Activated B cell treated with CpG ODN at 0.5 μM for 24 hours (primary cell): ENCODE measurements at regions of chr4 and their contacts with region 1.

Region 1: GRCh38 chr4:184453365-184454160 is 20.8 kb downstream of the IRF2 start:
- DNase-seq: no peak
- ATAC-seq: peak; percentile 81
- H3K4me3 Mint-ChIP-seq: peak overlapping the region; percentile 65
- H3K27ac Mint-ChIP-seq: peak overlapping the region; percentile 87
- H3K4me1 Mint-ChIP-seq: peaks cover 91% of the 10 kb centered on the region
- H3K27me3 Mint-ChIP-seq: no peaks in the 10 kb centered on the region
- CTCF ChIP-seq: no peak

Region 2: DNA sequence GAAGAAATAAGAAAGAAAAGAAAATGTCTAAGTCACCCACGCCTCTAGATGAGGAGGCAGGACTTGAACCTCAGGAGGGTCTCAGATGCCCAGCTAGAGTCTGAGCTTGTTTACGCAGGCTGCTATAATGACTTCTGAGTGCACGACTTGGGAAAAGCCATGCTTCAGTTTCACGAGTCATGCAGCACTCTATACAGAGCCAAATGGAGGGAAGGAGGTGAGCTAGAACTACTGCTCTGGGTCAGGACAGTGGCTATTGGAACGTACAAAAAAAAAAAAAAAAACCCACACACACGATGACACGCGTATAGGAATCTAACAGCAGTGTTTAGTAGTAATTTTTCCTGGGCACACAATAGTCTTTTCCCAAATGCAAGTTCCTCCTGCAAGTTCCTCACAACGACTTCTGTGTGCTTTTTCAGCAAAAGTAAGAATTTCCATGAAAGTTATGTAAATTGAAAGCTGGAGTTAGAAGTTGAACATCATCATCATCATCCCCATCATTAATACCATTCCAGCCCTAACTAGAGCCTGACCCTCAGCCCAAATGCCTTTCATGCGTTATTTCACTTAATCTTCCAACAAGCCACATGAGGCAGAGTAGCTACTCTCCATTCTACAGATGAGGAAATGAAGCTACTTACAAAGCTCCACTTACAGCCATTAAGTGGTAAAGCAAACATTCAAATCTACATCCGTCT is 15.8 kb before region 1 on chr4:
- CTCF ChIA-PET with region 1: no interaction called
- POLR2A ChIA-PET with region 1: interaction called, 8 read pairs
- intact Hi-C with region 1: loop called (anchors 2 kb)
- DNase-seq: no peak
- ATAC-seq: peak; percentile 79
- H3K4me3 Mint-ChIP-seq: no peak overlapping the region
- H3K27ac Mint-ChIP-seq: peak overlapping the region; percentile 72
- H3K4me1 Mint-ChIP-seq: peaks cover 73% of the 10 kb centered on the region
- H3K27me3 Mint-ChIP-seq: no peaks in the 10 kb centered on the region
- CTCF ChIP-seq: no peak

Region 3: GRCh38 chr4:184500748-184501589 is 47.4 kb after region 1 on chr4:
- CTCF ChIA-PET with region 1: no interaction called
- POLR2A ChIA-PET with region 1: no interaction called
- intact Hi-C with region 1: no loop called
- DNase-seq: no peak
- ATAC-seq: no peak
- H3K4me3 Mint-ChIP-seq: no peak overlapping the region
- H3K27ac Mint-ChIP-seq: no peak overlapping the region
- H3K4me1 Mint-ChIP-seq: peaks cover 37% of the 10 kb centered on the region
- H3K27me3 Mint-ChIP-seq: no peaks in the 10 kb centered on the region
- CTCF ChIP-seq: no peak